T-cell (primary cell): ENCODE measurements at regions of chr19 and their contacts with region 1.

Region 1: DNA sequence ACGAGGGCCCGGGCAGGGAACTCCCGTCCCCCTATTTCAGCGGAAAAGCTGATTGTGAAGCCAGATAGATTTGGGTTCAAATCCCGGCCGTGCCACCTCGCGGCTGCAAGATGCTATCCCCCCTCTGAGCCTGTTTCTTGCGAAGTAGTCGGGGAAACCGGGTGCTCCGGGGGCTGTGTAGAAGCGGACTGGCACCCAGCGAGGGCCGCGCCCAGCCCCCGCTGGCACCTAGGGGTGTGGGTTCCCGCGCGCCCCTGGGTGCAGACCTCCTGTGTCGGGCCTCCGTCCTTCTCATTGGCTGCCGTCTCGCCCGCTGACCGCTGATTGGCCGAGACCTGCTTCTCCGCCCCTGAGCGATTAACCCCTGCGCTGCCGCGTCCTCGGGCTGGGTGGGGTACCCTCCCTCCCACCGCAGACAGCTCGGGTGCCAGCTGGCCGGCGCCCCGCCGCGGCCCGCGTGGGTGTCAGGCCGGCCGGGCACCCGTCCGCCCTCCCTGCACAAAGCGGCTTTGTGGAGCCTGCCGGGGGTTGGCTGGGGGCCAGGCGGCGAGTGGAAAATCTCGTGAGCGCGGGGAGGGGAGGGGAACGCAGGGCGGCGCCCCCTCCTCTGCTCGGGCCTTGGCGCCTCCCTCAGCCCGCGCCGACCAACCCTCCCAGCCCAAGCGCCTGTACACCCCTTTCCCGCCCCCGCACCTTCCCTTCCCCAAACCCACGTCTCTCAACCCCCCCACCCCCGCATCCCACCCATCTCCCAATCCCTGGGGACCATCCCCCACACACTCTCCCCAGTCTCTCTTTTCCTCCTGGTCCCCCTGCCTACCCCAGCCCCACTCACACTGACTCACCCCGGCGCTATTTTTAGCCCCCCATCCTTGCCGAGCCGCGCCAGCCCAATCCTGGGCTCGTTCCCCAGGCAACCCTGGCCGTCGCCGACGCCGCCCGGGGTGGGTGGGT is 11.4 kb downstream of the CIC start:
- DNase-seq: peak; percentile 69 to 87 (median 78)
- ATAC-seq: peak; percentile 26 to 41 (median 38)
- H3K4me3 ChIP-seq: peak overlapping the region; percentile 60 to 98
- H3K4me3 Mint-ChIP-seq: peak overlapping the region in 2 of 3 donors; percentile 83 to 87
- H3K27ac ChIP-seq: peak overlapping the region; percentile 95
- H3K27ac Mint-ChIP-seq: peak overlapping the region; percentile 80 to 87
- H3K4me1 ChIP-seq: peaks cover 30 to 79% of the 10 kb centered on the region in 2 experiments
- H3K4me1 Mint-ChIP-seq: peaks cover 38 to 56% (median 44%) of the 10 kb centered on the region in 3 donors
- H3K27me3 ChIP-seq: no peaks in the 10 kb centered on the region
- H3K27me3 Mint-ChIP-seq: no peaks in the 10 kb centered on the region

Region 2: DNA sequence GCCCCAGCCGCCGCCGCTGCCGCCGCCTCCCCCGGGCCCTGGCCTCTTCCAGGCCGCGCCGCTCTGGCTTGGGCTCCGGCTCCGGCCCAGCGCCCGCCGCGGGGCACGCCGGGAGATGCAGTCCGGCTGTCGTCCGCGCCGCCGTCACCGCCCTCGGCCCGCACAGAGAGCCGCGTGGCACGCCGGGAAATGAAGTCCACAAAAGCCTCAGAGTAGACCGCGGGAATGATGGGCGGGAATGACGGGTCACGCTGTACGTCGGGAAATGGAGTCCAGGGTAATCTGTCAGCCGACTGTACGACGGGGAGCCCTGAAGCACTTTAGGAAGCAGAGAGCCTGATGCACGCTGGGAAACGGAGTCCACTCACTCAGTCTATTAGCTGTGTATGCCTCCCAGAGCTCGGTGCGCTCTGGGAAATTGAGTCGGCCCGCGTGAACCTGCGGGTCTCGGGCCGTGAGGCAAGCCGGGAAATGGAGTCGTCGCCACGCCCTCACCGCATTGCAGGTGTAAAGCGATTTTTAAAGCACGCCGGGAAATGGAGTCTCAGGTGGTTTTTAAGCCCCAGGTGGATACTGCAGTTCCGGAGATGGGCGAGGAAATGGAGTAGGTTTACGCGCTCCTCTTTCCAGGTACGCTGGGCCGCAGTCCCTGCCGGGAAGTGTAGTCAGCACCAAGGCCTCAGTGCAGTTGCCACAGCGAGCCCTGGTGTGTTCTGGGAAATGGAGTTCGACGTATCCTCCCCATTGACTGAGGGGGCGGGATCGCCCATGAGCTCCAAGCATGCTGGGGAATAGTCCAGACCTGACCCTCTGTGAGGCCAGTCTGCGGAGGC is 37.7 kb before region 1 on chr19 and contains the start of gene GSK3A:
- CTCF ChIA-PET with region 1: interaction called, 6 to 10 read pairs
- POLR2A ChIA-PET with region 1: interaction called in 1 of 2 experiments, 4 read pairs
- DNase-seq: peak; percentile 91 to 99 (median 97)
- ATAC-seq: peak; percentile 77 to 79 (median 78)
- H3K4me3 ChIP-seq: peak within 1 kb of the TSS; percentile 82 to 87
- H3K4me3 Mint-ChIP-seq: peak within 1 kb of the TSS; percentile 86 to 96 (median 89)
- H3K27ac ChIP-seq: peak within 1 kb of the TSS; percentile 85
- H3K27ac Mint-ChIP-seq: peak within 1 kb of the TSS; percentile 90 to 99
- H3K4me1 ChIP-seq: peaks cover 10 to 56% of the 10 kb centered on the region in 2 experiments
- H3K4me1 Mint-ChIP-seq: peaks cover 51 to 67% (median 59%) of the 10 kb centered on the region in 3 donors
- H3K27me3 ChIP-seq: no peaks in the 10 kb centered on the region
- H3K27me3 Mint-ChIP-seq: no peaks in the 10 kb centered on the region
- total RNA-seq, gene GSK3A: 21.4 to 45.8 (median 38.1) TPM

Region 3: GRCh38 chr19:42268704-42269477 is 11.6 kb before region 1 on chr19 and contains the start of gene CIC:
- CTCF ChIA-PET with region 1: interaction called, 6 to 22 read pairs
- POLR2A ChIA-PET with region 1: interaction called in 1 of 2 experiments, 7 read pairs
- DNase-seq: peak; percentile 97 to 100 (median 99)
- ATAC-seq: peak; percentile 79 to 82 (median 80)
- H3K4me3 ChIP-seq: peak within 1 kb of the TSS; percentile 76 to 94
- H3K4me3 Mint-ChIP-seq: peak within 1 kb of the TSS in 1 of 3 donors; percentile 89
- H3K27ac ChIP-seq: peak within 1 kb of the TSS; percentile 98
- H3K27ac Mint-ChIP-seq: peak within 1 kb of the TSS; percentile 97 to 99
- H3K4me1 ChIP-seq: peaks cover 21 to 40% of the 10 kb centered on the region in 2 experiments
- H3K4me1 Mint-ChIP-seq: peaks cover 8 to 34% (median 31%) of the 10 kb centered on the region in 3 donors
- H3K27me3 ChIP-seq: no peaks in the 10 kb centered on the region
- H3K27me3 Mint-ChIP-seq: no peaks in the 10 kb centered on the region
- total RNA-seq, gene CIC: 93.9 to 110 (median 104) TPM

Region 4: DNA sequence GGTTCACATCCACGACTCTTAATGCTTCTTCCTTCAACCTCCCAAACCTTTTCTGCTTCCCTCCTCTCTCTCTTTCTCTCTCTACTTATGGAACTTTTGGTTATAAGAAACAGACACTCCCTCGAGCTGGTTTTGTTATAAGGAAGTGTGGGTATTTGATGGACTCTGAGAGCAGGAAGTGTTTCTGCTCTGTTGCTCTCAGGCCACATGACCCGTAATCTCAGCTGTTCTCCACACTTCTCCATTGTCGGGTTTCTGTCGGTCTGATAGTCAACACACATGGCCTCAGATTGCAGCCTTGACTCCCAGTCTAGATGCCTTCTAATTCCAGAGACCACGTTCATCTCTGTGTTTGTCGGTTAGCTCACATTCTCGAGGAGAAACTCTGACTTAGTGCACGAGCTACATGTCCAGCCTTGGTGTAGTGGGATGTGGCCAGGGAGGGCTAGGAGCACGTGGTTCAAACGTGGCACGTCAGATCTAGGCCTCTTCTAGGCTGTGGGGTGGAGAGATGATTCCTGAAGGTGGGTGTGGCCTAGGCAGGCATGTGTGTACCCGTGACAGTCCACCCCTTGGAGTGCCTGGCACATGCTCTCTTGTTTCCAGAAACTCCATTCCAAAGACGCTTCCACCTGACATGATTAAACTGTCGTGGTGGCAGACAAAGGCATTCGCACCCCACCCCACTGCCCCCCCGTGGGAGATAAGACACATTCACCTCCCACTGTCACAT is 83.3 kb after region 1 on chr19:
- CTCF ChIA-PET with region 1: no interaction called
- POLR2A ChIA-PET with region 1: no interaction called
- DNase-seq: no peak
- ATAC-seq: no peak
- H3K4me3 ChIP-seq: no peak overlapping the region
- H3K4me3 Mint-ChIP-seq: no peak overlapping the region
- H3K27ac ChIP-seq: no peak overlapping the region
- H3K27ac Mint-ChIP-seq: peak overlapping the region; percentile 12
- H3K4me1 ChIP-seq: no peaks in the 10 kb centered on the region
- H3K4me1 Mint-ChIP-seq: peaks cover 0 to 2% (median 0%) of the 10 kb centered on the region in 3 donors
- H3K27me3 ChIP-seq: no peaks in the 10 kb centered on the region
- H3K27me3 Mint-ChIP-seq: no peaks in the 10 kb centered on the region